ENCODE measurements at regions of chr3 and their contacts with region 1.

Region 1: GRCh38 chr3:172332256-172333041 is 115.8 kb downstream of the GHSR start:
- DNase-seq: peak; percentile 53 to 68
- H3K4me3 ChIP-seq: no peak overlapping the region
- H3K4me3 Mint-ChIP-seq: no peak overlapping the region
- H3K27ac Mint-ChIP-seq: no peak overlapping the region
- H3K4me1 ChIP-seq: no peaks in the 10 kb centered on the region
- H3K4me1 Mint-ChIP-seq: no peaks in the 10 kb centered on the region
- H3K27me3 ChIP-seq: no peaks in the 10 kb centered on the region
- H3K27me3 Mint-ChIP-seq: no peaks in the 10 kb centered on the region
- CTCF ChIP-seq: peak; percentile 82 to 88

Region 2: GRCh38 chr3:172307141-172307560 is 25.3 kb before region 1 on chr3:
- CTCF ChIA-PET with region 1: interaction called, 10 read pairs
- POLR2A ChIA-PET with region 1: no interaction called
- intact Hi-C with region 1: no loop called
- DNase-seq: peak; percentile 29 to 44
- H3K4me3 ChIP-seq: no peak overlapping the region
- H3K4me3 Mint-ChIP-seq: peak overlapping the region; percentile 27
- H3K27ac Mint-ChIP-seq: peak overlapping the region; percentile 82
- H3K4me1 ChIP-seq: peaks cover 32% of the 10 kb centered on the region
- H3K4me1 Mint-ChIP-seq: peaks cover 34% of the 10 kb centered on the region
- H3K27me3 ChIP-seq: no peaks in the 10 kb centered on the region
- H3K27me3 Mint-ChIP-seq: no peaks in the 10 kb centered on the region
- CTCF ChIP-seq: no peak

Measured in Caco-2 (cell line).